Naive thymus-derived CD4-positive, alpha-beta T cell (primary cell): ENCODE measurements at regions of chr14 and their contacts with region 1.

Region 1: DNA sequence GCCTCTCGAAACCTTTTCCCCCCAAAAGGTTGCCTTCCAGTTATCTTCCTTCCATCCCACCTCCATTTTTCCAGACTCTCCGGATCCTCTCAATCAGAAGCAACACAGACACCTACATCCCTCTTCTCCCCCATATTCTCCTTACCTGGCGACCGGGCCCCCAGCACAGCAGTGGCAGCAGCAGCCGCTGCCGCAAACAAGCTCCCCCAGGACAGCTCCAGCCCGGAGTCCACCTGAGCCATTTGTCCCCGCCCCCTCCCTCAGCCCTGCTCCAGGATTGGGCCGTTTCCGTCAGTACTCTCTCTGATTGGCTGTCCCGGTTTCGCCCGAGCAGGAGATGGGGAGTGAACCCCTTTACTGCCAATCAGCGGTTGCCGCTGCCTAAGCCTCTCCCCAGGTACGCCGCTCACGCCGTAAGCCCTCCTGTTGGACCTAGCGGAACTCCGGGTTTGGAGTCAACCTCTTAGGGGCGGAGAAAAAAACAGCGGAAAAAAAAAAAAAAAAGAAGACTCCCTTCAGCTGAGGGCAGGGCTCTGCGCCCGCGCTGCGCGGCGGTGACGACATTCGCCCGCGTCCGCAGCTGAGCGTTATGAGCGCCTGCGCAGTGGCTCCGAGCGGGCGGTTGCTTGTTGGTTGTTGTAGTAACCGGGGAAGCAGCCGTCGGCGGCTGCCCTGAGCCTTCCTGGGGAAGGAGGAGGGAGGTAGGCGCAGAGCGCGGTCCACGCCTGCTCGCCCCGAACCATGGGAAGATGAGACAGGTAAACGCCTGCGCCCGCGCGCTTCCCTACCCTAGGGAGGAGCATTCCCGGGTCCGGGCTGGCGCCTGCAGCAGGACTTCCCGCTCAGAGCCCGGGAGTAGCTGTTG is at the starts of genes ERG28 and TTLL5:
- DNase-seq: peak; percentile 94 to 98 (median 97)
- ATAC-seq: peak; percentile 95
- H3K4me3 ChIP-seq: peak within 1 kb of the TSS; percentile 86
- H3K4me3 Mint-ChIP-seq: peak within 1 kb of the TSS; percentile 93 to 100 (median 98)
- H3K27ac ChIP-seq: peak within 1 kb of the TSS; percentile 89
- H3K27ac Mint-ChIP-seq: peak within 1 kb of the TSS; percentile 94 to 100 (median 97)
- H3K4me1 ChIP-seq: peaks cover 0 to 6% of the 10 kb centered on the region in 2 donors
- H3K4me1 Mint-ChIP-seq: peaks cover 11 to 48% (median 39%) of the 10 kb centered on the region in 7 donors
- H3K27me3 ChIP-seq: no peaks in the 10 kb centered on the region
- H3K27me3 Mint-ChIP-seq: peaks cover 0 to 6% (median 0%) of the 10 kb centered on the region in 5 donors
- total RNA-seq, gene ERG28: 7.6 to 17.0 (median 12.4) TPM
- total RNA-seq, gene TTLL5: 21.0 to 31.4 (median 21.6) TPM

Region 2: GRCh38 chr14:74493343-74494261 is 1167.3 kb before region 1 on chr14 and contains the start of gene ISCA2:
- CTCF ChIA-PET with region 1: no interaction called
- POLR2A ChIA-PET with region 1: no interaction called
- intact Hi-C with region 1: loop called (anchors 1 to 5 kb)
- DNase-seq: peak; percentile 95 to 99 (median 98)
- ATAC-seq: peak; percentile 94
- H3K4me3 ChIP-seq: peak within 1 kb of the TSS; percentile 96
- H3K4me3 Mint-ChIP-seq: peak within 1 kb of the TSS in 1 of 10 donors; percentile 89
- H3K27ac ChIP-seq: peak within 1 kb of the TSS; percentile 91
- H3K27ac Mint-ChIP-seq: peak within 1 kb of the TSS in 7 of 9 donors; percentile 87 to 96 (median 91)
- H3K4me1 ChIP-seq: peaks cover 12 to 18% of the 10 kb centered on the region in 2 donors
- H3K4me1 Mint-ChIP-seq: peaks cover 7 to 45% (median 37%) of the 10 kb centered on the region in 7 donors
- H3K27me3 ChIP-seq: no peaks in the 10 kb centered on the region
- H3K27me3 Mint-ChIP-seq: no peaks in the 10 kb centered on the region
- total RNA-seq, gene ISCA2: 13.9 to 39.5 (median 25.2) TPM

Region 3: GRCh38 chr14:75002392-75003249 is 658.2 kb before region 1 on chr14 and contains the start of gene EIF2B2:
- CTCF ChIA-PET with region 1: no interaction called
- POLR2A ChIA-PET with region 1: no interaction called
- intact Hi-C with region 1: loop called in 1 of 2 experiments (anchors 2 kb)
- DNase-seq: peak; percentile 90 to 100 (median 99)
- ATAC-seq: peak; percentile 97
- H3K4me3 ChIP-seq: peak within 1 kb of the TSS; percentile 93
- H3K4me3 Mint-ChIP-seq: peak within 1 kb of the TSS; percentile 78 to 99 (median 94)
- H3K27ac ChIP-seq: peak within 1 kb of the TSS; percentile 91
- H3K27ac Mint-ChIP-seq: peak within 1 kb of the TSS; percentile 95 to 100 (median 97)
- H3K4me1 ChIP-seq: peaks cover 15 to 23% of the 10 kb centered on the region in 2 donors
- H3K4me1 Mint-ChIP-seq: peaks cover 23 to 50% (median 44%) of the 10 kb centered on the region in 7 donors
- H3K27me3 ChIP-seq: no peaks in the 10 kb centered on the region
- H3K27me3 Mint-ChIP-seq: peaks cover 0 to 5% (median 0%) of the 10 kb centered on the region in 5 donors
- total RNA-seq, gene EIF2B2: 23.8 to 40.7 (median 26.1) TPM

Region 4: DNA sequence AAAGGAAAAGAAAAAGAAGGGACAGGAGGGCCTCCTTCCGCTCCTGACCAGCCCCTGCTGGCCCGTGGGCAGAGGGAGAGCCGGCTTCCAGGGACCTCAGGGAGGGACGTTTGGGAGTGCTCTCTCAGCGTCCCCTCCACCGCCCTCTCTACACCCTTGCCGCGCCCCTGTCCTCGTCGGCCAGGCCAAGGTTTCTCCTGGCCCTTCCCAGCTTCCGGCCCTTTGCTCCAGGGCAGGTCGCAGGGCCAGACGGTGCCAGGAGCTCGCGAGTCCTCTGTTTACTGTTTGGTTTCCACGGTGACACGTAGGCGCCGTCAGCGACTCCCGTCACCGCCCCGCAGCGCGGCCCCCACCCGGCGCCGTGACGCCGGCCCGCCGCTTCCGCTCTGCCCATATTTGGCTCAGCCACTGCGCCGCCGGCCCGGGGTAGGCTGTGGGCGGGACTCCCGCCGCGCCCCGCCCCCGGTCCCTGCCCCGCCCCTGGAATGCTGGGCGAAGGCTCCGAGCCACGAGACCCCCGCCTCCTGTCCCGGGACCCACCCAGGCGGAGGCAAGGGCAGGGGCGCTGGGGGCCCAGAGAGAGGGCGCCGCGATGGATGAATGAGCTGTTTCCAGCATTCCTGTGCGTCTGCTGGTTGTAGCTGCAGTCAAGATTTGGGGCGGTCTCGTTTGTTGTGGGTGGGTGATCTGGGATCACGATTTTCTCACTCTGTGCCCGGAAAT is 366.8 kb before region 1 on chr14:
- CTCF ChIA-PET with region 1: no interaction called
- POLR2A ChIA-PET with region 1: no interaction called
- intact Hi-C with region 1: loop called in 1 of 2 experiments (anchors 5 kb)
- DNase-seq: peak; percentile 92 to 98 (median 96)
- ATAC-seq: peak; percentile 92
- H3K4me3 ChIP-seq: peak overlapping the region; percentile 61
- H3K4me3 Mint-ChIP-seq: peak overlapping the region; percentile 79 to 93 (median 91)
- H3K27ac ChIP-seq: peak overlapping the region; percentile 96
- H3K27ac Mint-ChIP-seq: peak overlapping the region; percentile 85 to 97 (median 94)
- H3K4me1 ChIP-seq: peaks cover 17 to 25% of the 10 kb centered on the region in 2 donors
- H3K4me1 Mint-ChIP-seq: peaks cover 10 to 26% (median 22%) of the 10 kb centered on the region in 7 donors
- H3K27me3 ChIP-seq: no peaks in the 10 kb centered on the region
- H3K27me3 Mint-ChIP-seq: peaks cover 0 to 24% (median 0%) of the 10 kb centered on the region in 5 donors

Region 5: DNA sequence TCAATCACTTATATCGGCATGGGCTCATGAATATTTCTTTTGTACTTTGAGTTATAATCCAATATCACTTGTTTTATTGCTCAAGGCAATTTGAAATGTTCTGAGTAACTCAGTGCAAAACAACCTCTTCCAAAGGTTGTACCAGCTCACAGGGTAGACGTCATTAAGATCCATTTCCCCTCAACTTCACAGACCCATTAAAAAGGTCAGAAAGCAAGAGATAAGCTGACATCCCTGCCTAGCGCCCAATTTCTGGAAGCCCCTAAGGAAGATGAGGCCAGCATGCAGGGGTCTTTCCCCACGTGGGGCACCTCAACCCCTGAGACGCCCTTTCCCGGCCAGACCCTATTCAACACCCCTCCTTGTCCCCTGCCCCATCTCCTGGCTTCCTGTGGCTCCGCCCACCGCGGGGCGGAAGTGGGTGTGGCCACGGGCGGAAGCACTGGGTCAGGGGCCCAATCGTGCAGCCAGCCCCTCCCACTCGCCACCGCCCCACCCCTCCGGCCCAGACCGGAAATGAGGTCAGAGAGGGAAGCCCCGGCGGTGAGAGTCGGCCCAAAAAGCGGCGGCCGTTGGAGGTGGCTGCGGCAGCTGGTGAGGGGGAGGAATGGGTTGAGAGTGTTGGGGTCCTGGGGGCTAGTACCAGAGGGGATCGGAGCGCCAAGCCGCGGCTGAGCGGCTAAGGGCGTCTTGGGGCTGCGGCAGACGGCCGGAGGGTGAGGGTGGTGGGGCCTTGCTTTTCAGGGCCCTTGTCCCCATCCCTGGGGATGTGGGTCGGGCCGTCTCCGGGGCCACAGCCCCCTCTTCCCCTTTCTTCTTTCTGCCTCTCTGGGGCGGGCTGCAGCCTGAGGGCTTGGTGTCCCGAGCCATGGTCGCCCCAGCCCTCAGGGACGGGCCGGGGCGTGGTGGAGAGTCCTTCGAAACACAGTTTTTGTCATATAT is 490.8 kb after region 1 on chr14 and contains the start of gene GPATCH2L:
- CTCF ChIA-PET with region 1: no interaction called
- POLR2A ChIA-PET with region 1: no interaction called
- intact Hi-C with region 1: loop called (anchors 5 kb)
- DNase-seq: peak; percentile 90 to 98 (median 95)
- ATAC-seq: peak; percentile 96
- H3K4me3 ChIP-seq: peak within 1 kb of the TSS; percentile 91
- H3K4me3 Mint-ChIP-seq: peak within 1 kb of the TSS; percentile 89 to 98 (median 95)
- H3K27ac ChIP-seq: peak within 1 kb of the TSS; percentile 95
- H3K27ac Mint-ChIP-seq: peak within 1 kb of the TSS; percentile 86 to 98 (median 96)
- H3K4me1 ChIP-seq: peaks cover 40 to 44% of the 10 kb centered on the region in 2 donors
- H3K4me1 Mint-ChIP-seq: peaks cover 40 to 56% (median 53%) of the 10 kb centered on the region in 7 donors
- H3K27me3 ChIP-seq: no peaks in the 10 kb centered on the region
- H3K27me3 Mint-ChIP-seq: peaks cover 0 to 18% (median 0%) of the 10 kb centered on the region in 5 donors
- total RNA-seq, gene GPATCH2L: 60.4 to 83.1 (median 66.6) TPM

Region 6: GRCh38 chr14:77376771-77377501 is 1716.1 kb after region 1 on chr14 and contains the starts of genes SAMD15 and TMED8:
- CTCF ChIA-PET with region 1: no interaction called
- POLR2A ChIA-PET with region 1: no interaction called
- intact Hi-C with region 1: loop called in 1 of 2 experiments (anchors 2 kb)
- DNase-seq: peak; percentile 77 to 88 (median 83)
- ATAC-seq: peak; percentile 96
- H3K4me3 ChIP-seq: peak within 1 kb of the TSS; percentile 99
- H3K4me3 Mint-ChIP-seq: peak within 1 kb of the TSS in 7 of 10 donors; percentile 88 to 97 (median 93)
- H3K27ac ChIP-seq: peak within 1 kb of the TSS; percentile 87
- H3K27ac Mint-ChIP-seq: peak within 1 kb of the TSS; percentile 52 to 93 (median 77)
- H3K4me1 ChIP-seq: peaks cover 14 to 18% of the 10 kb centered on the region in 2 donors
- H3K4me1 Mint-ChIP-seq: peaks cover 17 to 41% (median 39%) of the 10 kb centered on the region in 7 donors
- H3K27me3 ChIP-seq: no peaks in the 10 kb centered on the region
- H3K27me3 Mint-ChIP-seq: peaks cover 0 to 10% (median 0%) of the 10 kb centered on the region in 5 donors
- total RNA-seq, gene SAMD15: 0.27 to 0.46 (median 0.42) TPM in 3 of 5 experiments, not detected in the others
- total RNA-seq, gene TMED8: 5.5 to 18.6 (median 7.0) TPM